Posterior cingulate gyrus (tissue), 11 donors: ENCODE measurements at regions of chr9 and their contacts with region 1.

Region 1: GRCh38 chr9:2662496-2662895 is 40.9 kb downstream of the VLDLR start:
- DNase-seq: peak in 8 of 10 donors; percentile 36 to 90 (median 68)

Region 2: DNA sequence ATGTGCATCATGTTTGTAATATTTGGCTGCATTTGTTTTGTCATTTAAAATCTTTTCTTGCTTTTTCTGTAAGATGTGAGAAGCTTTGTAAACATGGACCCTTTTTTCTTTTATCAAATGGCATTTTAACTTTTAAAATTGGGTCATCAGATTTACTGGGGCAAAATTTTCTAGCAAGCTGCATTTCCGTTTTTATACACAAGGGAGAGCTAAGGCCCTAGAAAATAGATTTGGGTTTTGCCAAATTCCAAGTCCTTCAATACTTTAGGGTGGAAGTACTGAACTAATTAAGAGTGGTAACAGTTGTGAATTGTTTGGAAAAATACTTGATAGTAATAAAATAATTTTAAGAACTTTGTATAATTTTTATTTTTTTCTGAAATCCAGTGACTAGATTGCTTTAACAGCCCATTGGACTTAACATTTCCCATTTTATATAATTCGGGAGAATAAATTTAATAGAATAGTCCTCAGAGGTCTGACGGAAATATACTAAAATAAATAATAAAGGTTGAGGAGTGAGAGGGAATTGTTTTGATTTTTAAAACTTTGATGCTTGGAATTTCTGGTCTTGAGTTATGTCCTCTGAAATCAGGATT is 529.9 kb before region 1 on chr9:
- intact Hi-C with region 1: loop called (anchors 10 kb)
- DNase-seq: no peak

Region 3: DNA sequence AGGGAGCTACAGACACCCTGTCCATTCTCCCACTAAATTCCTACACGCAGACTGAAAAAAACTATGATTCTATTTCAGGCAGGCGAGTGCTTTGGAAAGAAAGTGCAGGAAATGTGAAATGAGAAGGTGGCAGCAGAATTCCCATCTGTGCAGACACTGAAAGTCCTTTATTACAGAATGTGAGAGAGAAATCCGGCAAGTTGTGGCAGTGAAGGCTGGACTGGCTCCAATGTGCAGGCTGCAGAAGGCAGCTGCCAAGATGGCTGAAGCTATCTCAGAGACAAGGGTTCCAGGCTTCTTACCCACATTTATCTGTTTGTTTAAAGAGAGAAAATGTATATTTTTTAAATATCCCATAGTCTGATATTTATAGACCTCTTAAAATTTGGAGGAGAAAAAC is 202.7 kb before region 1 on chr9:
- intact Hi-C with region 1: loop called (anchors 10 kb)
- DNase-seq: peak; percentile 39 to 91 (median 58)